K562 (cell line): ENCODE measurements at regions of chr7 and their contacts with region 1.

Region 1: GRCh38 chr7:37181550-37181932 is 267.1 kb downstream of the ELMO1 start:
- DNase-seq: no peak
- ATAC-seq: no peak
- H3K4me3 ChIP-seq: no peak overlapping the region
- H3K27ac ChIP-seq: no peak overlapping the region
- H3K4me1 ChIP-seq: no peaks in the 10 kb centered on the region
- H3K27me3 ChIP-seq: no peaks in the 10 kb centered on the region
- CTCF ChIP-seq: no peak
- EP300 ChIP-seq: no peak
- POLR2A ChIP-seq: no peak
- RAD21 ChIP-seq: no peak

Region 2: DNA sequence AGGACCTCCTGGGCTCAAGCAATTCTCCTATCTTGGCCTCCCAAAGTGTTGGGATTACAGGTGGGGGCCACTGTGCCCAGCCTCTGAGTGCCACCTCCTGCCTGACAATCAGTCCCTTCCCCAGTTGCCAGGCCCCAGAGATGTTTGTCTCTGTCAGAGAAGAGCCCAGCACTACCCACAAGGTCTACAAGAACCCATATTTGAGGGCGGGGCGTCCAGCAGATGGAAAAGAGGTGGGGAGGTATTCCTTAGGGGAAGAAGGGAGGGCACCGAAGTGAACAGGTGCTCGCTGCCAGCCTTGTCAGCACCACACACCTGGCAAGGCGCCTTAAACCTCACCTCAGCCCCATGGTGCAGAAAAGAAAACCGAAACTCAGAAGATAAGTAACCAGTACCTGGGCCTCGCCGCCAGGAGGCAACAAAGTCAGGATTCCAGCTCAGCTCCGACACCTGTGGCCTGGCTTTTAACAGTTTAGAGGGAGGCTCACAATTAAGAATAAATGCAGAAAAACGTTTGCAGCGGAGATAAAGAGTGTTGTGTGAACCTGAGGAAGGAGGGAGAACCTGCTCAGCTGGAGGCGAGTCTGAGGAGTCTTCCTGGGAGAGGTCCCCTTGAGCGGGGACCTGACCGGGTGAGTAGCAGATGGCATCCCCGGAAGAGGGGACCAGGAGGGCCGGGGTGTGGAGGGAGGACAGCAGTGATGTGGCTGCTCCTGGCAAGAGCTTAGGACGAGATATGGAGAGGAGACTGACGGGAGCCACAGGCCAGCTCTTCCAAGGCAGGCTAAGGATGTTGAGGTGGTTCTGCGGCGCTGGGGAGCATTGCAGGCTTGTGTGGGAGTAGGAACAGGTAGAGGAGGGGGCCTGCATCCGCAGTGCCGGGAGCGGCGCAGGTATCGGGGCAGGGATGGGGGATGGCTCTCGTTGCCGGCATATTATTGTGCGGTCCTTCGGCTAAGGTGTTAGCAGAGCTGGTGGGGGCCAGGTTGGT is 868.9 kb before region 1 on chr7:
- CTCF ChIA-PET with region 1: no interaction called
- POLR2A ChIA-PET with region 1: no interaction called
- in situ Hi-C with region 1: no loop called
- intact Hi-C with region 1: loop called (anchors 10 kb)
- DNase-seq: peak; percentile 66 to 76 (median 70)
- ATAC-seq: peak; percentile 95
- H3K4me3 ChIP-seq: no peak overlapping the region
- H3K27ac ChIP-seq: no peak overlapping the region
- H3K4me1 ChIP-seq: peaks cover 0 to 8% of the 10 kb centered on the region in 2 experiments; a peak in 2 of 5 replicates
- H3K27me3 ChIP-seq: peaks cover 0 to 33% of the 10 kb centered on the region in 2 experiments; a peak in 2 of 5 replicates
- CTCF ChIP-seq: peak; percentile 83 to 89 (median 84)
- EP300 ChIP-seq: no peak
- POLR2A ChIP-seq: no peak
- RAD21 ChIP-seq: peak; percentile 55 to 73

Region 3: DNA sequence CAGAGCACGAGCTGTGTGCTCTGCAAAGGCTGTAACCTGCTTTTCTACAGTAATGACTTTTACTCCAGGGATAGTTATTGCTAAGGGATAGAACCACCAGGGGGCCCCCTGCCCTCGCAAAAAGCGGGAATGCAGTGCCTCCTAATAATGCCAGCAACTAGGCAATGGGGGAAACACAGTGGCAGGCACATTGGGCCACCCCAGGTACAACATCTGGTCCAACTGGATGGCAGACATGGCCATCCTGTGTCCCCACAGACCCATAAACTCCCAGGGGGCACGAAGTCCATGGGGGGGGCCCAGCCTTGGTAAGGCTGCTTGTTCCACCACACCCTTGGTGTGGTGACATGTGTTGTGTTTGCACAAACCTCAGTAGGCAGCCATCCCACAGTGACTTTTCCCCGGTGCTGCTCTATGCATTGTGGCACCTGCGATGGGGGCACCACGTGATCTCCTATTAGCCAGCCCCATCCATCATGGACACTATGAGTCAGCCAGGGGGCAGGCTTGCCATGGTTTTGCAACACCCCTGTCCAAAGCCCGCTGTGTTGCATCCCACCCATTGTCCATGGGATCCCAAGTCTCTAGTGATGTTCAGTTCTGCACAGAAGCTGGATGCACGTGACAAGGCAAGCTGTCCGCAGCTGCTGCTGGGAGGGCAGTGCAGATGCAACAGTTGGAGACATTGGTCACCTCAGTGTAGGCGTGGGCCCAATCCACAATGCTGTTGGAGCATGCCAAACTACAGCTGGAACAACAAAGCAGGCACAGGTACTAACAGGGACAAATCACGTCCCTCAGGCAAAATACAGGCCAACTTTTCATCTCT is 707.9 kb before region 1 on chr7:
- CTCF ChIA-PET with region 1: interaction called, 14 read pairs
- POLR2A ChIA-PET with region 1: no interaction called
- in situ Hi-C with region 1: no loop called
- intact Hi-C with region 1: loop called (anchors 1 kb)
- DNase-seq: peak; percentile 51 to 70 (median 58)
- ATAC-seq: peak; percentile 90
- H3K4me3 ChIP-seq: no peak overlapping the region
- H3K27ac ChIP-seq: 0 out of 3 replicates have a peak overlapping the region, but pooled peaks have one; percentile 9
- H3K4me1 ChIP-seq: peaks cover 8 to 12% of the 10 kb centered on the region in 2 experiments; a peak in 3 of 5 replicates
- H3K27me3 ChIP-seq: no peaks in the 10 kb centered on the region; a peak in 1 of 5 replicates
- CTCF ChIP-seq: peak; percentile 81 to 88 (median 83)
- EP300 ChIP-seq: no peak
- POLR2A ChIP-seq: no peak
- RAD21 ChIP-seq: peak; percentile 85 to 91

Region 4: GRCh38 chr7:36487756-36488336 is 693.7 kb before region 1 on chr7:
- CTCF ChIA-PET with region 1: no interaction called
- POLR2A ChIA-PET with region 1: interaction called, 3 read pairs
- in situ Hi-C with region 1: no loop called
- intact Hi-C with region 1: loop called (anchors 2 kb)
- DNase-seq: peak in 1 of 4 experiments; percentile 37
- ATAC-seq: peak; percentile 55; the same call in 2 of the 3 replicates
- H3K4me3 ChIP-seq: no peak overlapping the region
- H3K27ac ChIP-seq: no peak overlapping the region
- H3K4me1 ChIP-seq: no peaks in the 10 kb centered on the region
- H3K27me3 ChIP-seq: peaks cover 4 to 17% of the 10 kb centered on the region in 2 experiments; a peak in 3 of 5 replicates
- CTCF ChIP-seq: peak; percentile 54 to 73 (median 57); a peak in 5 of 6 replicates
- EP300 ChIP-seq: no peak
- POLR2A ChIP-seq: no peak
- RAD21 ChIP-seq: peak; percentile 77 to 92

Region 5: GRCh38 chr7:36967387-36967786 is 214.2 kb before region 1 on chr7:
- CTCF ChIA-PET with region 1: no interaction called
- POLR2A ChIA-PET with region 1: no interaction called
- in situ Hi-C with region 1: no loop called
- intact Hi-C with region 1: loop called (anchors 1 kb)
- DNase-seq: peak; percentile 48 to 63 (median 61)
- ATAC-seq: peak; percentile 98
- H3K4me3 ChIP-seq: no peak overlapping the region
- H3K27ac ChIP-seq: no peak overlapping the region
- H3K4me1 ChIP-seq: no peaks in the 10 kb centered on the region
- H3K27me3 ChIP-seq: no peaks in the 10 kb centered on the region
- CTCF ChIP-seq: peak; percentile 68 to 79 (median 73)
- EP300 ChIP-seq: no peak
- POLR2A ChIP-seq: no peak
- RAD21 ChIP-seq: peak; percentile 51 to 65

Region 6: GRCh38 chr7:36986429-36987362 is 194.8 kb before region 1 on chr7:
- CTCF ChIA-PET with region 1: no interaction called
- POLR2A ChIA-PET with region 1: no interaction called
- in situ Hi-C with region 1: loop called (anchors 10 kb)
- intact Hi-C with region 1: loop called (anchors 1 kb)
- DNase-seq: peak; percentile 60 to 78 (median 72)
- ATAC-seq: peak; percentile 86
- H3K4me3 ChIP-seq: no peak overlapping the region
- H3K27ac ChIP-seq: no peak overlapping the region
- H3K4me1 ChIP-seq: no peaks in the 10 kb centered on the region
- H3K27me3 ChIP-seq: 0 out of 5 replicates have a peak, but pooled peaks cover 0 to 5% of the 10 kb centered on the region in 2 experiments
- CTCF ChIP-seq: peak; percentile 78 to 88 (median 79)
- EP300 ChIP-seq: no peak
- POLR2A ChIP-seq: no peak
- RAD21 ChIP-seq: peak; percentile 59 to 73

Region 7: DNA sequence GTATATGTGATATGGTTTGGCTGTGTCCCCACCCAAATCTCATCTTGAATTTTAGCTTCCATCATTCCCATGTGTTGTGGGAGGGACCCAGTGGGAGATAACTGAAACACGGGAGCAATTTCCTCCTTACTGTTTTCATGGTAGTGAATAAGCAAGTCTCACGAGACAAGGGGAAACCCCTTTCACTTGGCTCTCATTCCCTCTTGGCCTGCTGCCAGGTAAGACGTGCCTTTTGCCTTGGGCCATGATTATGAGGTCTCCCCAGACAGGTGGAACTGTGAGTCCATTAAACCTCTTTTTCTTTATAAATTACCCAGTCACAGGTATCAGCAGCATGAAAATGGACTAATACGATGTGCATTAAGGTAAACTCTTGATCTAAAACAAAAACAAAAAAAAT is 100.1 kb before region 1 on chr7:
- CTCF ChIA-PET with region 1: no interaction called
- POLR2A ChIA-PET with region 1: no interaction called
- in situ Hi-C with region 1: no loop called
- intact Hi-C with region 1: no loop called
- DNase-seq: peak in 1 of 4 experiments; percentile 9
- ATAC-seq: no peak
- H3K4me3 ChIP-seq: no peak overlapping the region
- H3K27ac ChIP-seq: no peak overlapping the region
- H3K4me1 ChIP-seq: peaks cover 0 to 5% of the 10 kb centered on the region in 2 experiments; a peak in 3 of 5 replicates
- H3K27me3 ChIP-seq: no peaks in the 10 kb centered on the region
- CTCF ChIP-seq: no peak
- EP300 ChIP-seq: no peak
- POLR2A ChIP-seq: no peak
- RAD21 ChIP-seq: no peak

Region 8: DNA sequence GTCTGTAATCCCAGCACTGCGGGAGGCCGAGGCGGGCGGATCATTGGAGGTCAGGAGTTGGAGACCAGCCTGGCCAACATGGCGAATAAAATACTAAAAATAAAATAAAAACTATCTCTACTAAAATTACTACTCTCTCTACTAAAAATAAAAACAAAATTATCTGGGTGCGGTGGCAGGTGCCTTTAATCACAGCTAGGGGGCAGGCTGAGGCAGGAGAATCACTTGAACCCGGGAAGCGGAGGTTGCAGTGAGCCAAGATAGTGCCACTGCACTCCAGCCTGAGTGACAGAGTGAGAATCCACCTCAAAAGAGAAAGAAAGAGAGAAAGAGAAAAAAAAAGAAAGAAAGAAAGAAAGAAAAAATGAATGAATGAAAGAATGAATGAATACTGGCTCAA is 84.3 kb before region 1 on chr7:
- CTCF ChIA-PET with region 1: no interaction called
- POLR2A ChIA-PET with region 1: no interaction called
- in situ Hi-C with region 1: no loop called
- intact Hi-C with region 1: loop called (anchors 1 kb)
- DNase-seq: peak in 1 of 4 experiments; percentile 5
- ATAC-seq: no peak
- H3K4me3 ChIP-seq: no peak overlapping the region
- H3K27ac ChIP-seq: no peak overlapping the region
- H3K4me1 ChIP-seq: no peaks in the 10 kb centered on the region
- H3K27me3 ChIP-seq: no peaks in the 10 kb centered on the region
- CTCF ChIP-seq: peak; percentile 13 to 37 (median 29); a peak in 2 of 6 replicates
- EP300 ChIP-seq: no peak
- POLR2A ChIP-seq: no peak
- RAD21 ChIP-seq: peak; percentile 31 to 56